Caco-2 (cell line): ENCODE measurements at regions of chr14 and their contacts with region 1.

Region 1: GRCh38 chr14:23362200-23362599 is 2.8 kb downstream of the EFS start:
- DNase-seq: peak in 1 of 2 experiments; percentile 31
- H3K4me3 ChIP-seq: no peak overlapping the region
- H3K4me3 Mint-ChIP-seq: no peak overlapping the region
- H3K27ac Mint-ChIP-seq: no peak overlapping the region
- H3K4me1 ChIP-seq: no peaks in the 10 kb centered on the region
- H3K4me1 Mint-ChIP-seq: no peaks in the 10 kb centered on the region
- H3K27me3 ChIP-seq: no peaks in the 10 kb centered on the region
- H3K27me3 Mint-ChIP-seq: no peaks in the 10 kb centered on the region
- CTCF ChIP-seq: peak in 1 of 2 experiments; percentile 44

Region 2: DNA sequence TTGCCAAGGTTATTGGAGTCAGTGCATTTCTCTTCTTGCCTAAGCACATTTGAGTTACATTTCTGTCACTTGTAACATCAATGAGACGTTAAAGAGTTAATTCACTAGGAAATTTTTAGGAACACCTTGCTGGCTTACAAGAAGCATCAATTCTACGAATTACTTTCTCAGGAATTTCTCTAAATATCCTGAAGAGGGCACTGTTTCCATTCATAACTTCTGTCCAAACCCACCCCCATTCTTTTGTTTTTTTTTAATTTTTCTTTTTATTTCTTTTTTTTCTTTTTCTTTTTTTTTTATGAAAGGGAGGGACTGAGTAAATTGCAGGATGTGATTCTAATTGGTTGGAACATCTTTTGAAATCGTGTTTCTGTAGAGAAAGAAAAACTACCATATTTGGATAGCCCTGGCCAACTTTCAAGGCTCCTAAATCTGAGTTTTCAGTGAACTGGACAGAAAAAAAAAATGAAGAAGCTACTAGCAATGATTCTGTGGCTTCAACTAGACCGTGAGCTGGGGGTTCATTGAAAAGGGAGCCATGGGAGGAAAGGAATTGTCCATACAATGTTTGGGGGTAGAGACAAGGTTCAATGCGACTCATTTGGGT is 1058.5 kb before region 1 on chr14:
- CTCF ChIA-PET with region 1: no interaction called
- POLR2A ChIA-PET with region 1: no interaction called
- intact Hi-C with region 1: no loop called
- DNase-seq: no peak
- H3K4me3 ChIP-seq: no peak overlapping the region
- H3K4me3 Mint-ChIP-seq: no peak overlapping the region
- H3K27ac Mint-ChIP-seq: no peak overlapping the region
- H3K4me1 ChIP-seq: peaks cover 15% of the 10 kb centered on the region
- H3K4me1 Mint-ChIP-seq: no peaks in the 10 kb centered on the region
- H3K27me3 ChIP-seq: no peaks in the 10 kb centered on the region
- H3K27me3 Mint-ChIP-seq: no peaks in the 10 kb centered on the region
- CTCF ChIP-seq: peak; percentile 43 to 49

Region 3: DNA sequence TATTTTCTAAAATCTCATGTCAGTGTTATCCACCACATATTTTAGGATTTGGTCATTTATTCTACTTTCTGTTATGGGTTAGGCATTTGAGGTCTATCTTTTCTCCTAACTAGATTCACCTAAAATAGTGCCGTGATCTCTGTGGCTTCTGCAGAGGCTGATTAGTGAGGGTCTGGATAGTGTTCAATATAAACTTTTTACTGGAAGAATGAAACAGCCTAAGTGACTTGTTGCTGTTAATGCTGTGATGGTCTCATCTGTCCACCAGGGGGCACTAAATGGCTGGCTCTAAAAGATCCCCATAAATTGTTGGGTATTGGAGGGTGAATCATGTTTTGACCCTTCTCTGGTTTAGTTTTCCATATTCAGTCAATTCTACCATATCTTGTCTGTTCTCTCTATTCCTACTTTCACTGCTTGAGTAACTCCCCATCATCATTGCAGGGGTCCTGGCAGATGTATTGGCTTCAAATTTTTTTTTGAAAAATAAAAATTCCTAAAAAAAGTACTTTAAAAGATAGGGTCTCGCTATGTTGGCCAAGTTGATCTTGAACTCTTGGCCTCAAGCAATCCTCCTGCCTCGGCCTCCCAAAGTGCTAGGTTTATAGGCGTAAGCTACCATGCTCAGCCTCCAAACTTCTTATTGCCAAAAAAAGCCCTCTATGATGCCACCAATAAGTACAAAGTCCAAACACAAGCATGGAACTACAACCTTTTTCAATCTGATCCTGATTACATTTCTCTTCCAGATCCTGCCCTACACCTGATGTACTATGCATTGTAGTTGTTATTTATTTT is 34.1 kb before region 1 on chr14:
- CTCF ChIA-PET with region 1: interaction called, 3 read pairs
- POLR2A ChIA-PET with region 1: interaction called, 3 read pairs
- intact Hi-C with region 1: loop called (anchors 1 kb)
- DNase-seq: peak; percentile 65 to 69
- H3K4me3 ChIP-seq: no peak overlapping the region
- H3K4me3 Mint-ChIP-seq: no peak overlapping the region
- H3K27ac Mint-ChIP-seq: no peak overlapping the region
- H3K4me1 ChIP-seq: no peaks in the 10 kb centered on the region
- H3K4me1 Mint-ChIP-seq: peaks cover 1% of the 10 kb centered on the region
- H3K27me3 ChIP-seq: no peaks in the 10 kb centered on the region
- H3K27me3 Mint-ChIP-seq: no peaks in the 10 kb centered on the region
- CTCF ChIP-seq: peak; percentile 73 to 74